ENCODE measurements at regions of chr11 and their contacts with region 1.

Region 1: DNA sequence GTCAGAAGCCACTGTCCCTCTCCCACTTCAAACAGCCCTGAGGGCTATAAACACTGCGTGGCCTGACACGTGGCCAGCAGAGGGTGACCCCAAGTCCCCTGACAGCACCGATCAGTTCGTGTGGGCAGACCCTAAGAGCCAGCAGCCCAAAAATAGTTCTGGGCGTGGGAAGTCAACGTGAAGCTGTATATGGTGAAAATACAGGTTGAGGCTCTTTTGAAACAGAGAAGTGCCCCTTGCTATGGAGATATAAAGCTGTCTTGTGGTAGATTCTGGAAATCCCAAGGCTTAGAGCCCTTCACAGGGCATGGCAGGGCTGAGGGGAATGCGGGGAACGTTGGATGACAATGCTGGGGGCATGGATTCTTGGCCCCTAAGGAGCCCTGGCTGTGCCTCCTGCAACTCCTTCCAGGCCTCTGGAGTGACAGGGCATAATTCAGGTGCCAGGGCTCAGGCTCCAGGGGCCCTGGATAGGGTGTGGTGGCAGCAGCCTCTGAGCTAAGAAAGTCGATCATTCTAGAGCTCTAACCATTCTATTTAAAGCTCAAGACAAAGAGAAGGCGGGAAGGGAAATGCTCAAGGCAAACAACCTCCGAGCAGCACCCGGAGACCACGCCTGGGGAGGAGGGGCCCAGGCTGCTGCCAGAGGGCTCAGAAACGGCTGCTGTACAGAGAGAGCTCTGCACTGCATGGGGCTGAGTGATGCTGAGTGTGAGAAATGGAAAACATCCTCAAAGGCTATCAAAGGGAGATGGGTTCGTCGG is 60.4 kb upstream of the CD5 start:
- DNase-seq: peak; percentile 72 to 95 (median 90)
- ATAC-seq: peak; percentile 96
- H3K4me3 ChIP-seq: peak overlapping the region; percentile 27
- H3K4me3 Mint-ChIP-seq: peak overlapping the region; percentile 83
- H3K27ac ChIP-seq: peak overlapping the region; percentile 90 to 93
- H3K27ac Mint-ChIP-seq: peak overlapping the region; percentile 98
- H3K4me1 ChIP-seq: peaks cover 56% of the 10 kb centered on the region
- H3K4me1 Mint-ChIP-seq: peaks cover 62% of the 10 kb centered on the region
- H3K27me3 ChIP-seq: no peaks in the 10 kb centered on the region
- H3K27me3 Mint-ChIP-seq: no peaks in the 10 kb centered on the region
- CTCF ChIP-seq: no peak

Region 2: GRCh38 chr11:60485986-60486385 is 556.0 kb before region 1 on chr11:
- CTCF ChIA-PET with region 1: no interaction called
- POLR2A ChIA-PET with region 1: no interaction called
- intact Hi-C with region 1: no loop called
- DNase-seq: peak in 3 of 14 experiments; percentile 36 to 50 (median 38)
- ATAC-seq: peak; percentile 34
- H3K4me3 ChIP-seq: no peak overlapping the region
- H3K4me3 Mint-ChIP-seq: no peak overlapping the region
- H3K27ac ChIP-seq: no peak overlapping the region
- H3K27ac Mint-ChIP-seq: no peak overlapping the region
- H3K4me1 ChIP-seq: no peaks in the 10 kb centered on the region
- H3K4me1 Mint-ChIP-seq: peaks cover 4% of the 10 kb centered on the region
- H3K27me3 ChIP-seq: no peaks in the 10 kb centered on the region
- H3K27me3 Mint-ChIP-seq: no peaks in the 10 kb centered on the region
- CTCF ChIP-seq: no peak

Region 3: GRCh38 chr11:60544076-60544475 is 497.9 kb before region 1 on chr11:
- CTCF ChIA-PET with region 1: no interaction called
- POLR2A ChIA-PET with region 1: no interaction called
- intact Hi-C with region 1: no loop called
- DNase-seq: no peak
- ATAC-seq: no peak
- H3K4me3 ChIP-seq: no peak overlapping the region
- H3K4me3 Mint-ChIP-seq: no peak overlapping the region
- H3K27ac ChIP-seq: no peak overlapping the region
- H3K27ac Mint-ChIP-seq: no peak overlapping the region
- H3K4me1 ChIP-seq: no peaks in the 10 kb centered on the region
- H3K4me1 Mint-ChIP-seq: no peaks in the 10 kb centered on the region
- H3K27me3 ChIP-seq: no peaks in the 10 kb centered on the region
- H3K27me3 Mint-ChIP-seq: peaks cover 26% of the 10 kb centered on the region
- CTCF ChIP-seq: no peak

Region 4: DNA sequence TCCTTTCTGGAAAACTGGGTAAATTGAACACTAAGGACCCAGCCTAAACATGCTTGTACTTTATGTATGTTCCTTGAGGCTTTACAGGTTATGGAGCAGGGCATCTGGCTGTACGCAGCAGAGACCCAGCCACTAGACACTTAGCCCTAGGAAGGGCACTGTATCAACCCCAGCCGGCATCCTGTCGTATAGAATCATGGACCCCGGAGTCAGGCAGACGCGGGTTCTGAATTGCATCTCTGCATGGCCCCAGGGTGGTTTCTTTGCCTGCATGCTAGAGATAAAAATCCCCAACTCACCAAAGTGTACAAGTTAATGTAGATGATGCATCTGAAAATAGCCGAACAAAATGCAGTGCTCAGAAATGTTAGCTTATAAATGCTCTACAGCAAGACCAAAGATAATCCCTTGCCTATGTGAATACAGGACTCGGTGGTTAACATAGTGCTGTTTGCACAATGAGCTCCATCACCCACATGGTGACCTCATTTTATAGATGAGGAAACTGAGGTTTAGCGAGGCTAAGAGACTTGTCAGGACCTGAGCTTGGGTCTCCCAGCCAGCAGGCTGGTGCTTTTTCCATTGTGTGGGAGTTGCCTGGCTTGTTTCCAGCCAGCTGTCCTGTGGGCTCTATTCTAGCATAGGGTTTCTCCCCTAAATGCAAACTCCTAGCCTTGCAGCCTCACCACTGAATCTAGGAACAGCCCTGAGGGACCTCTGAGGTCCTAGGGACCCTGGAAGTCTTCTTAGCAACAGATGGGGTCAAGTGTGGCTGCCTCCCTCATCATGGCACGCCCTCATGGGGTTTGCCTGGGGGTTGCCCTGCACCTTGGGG is 63.2 kb before region 1 on chr11:
- CTCF ChIA-PET with region 1: interaction called, 3 read pairs
- POLR2A ChIA-PET with region 1: interaction called, 89 read pairs
- intact Hi-C with region 1: no loop called
- DNase-seq: peak in 5 of 14 experiments; percentile 37 to 76 (median 71)
- ATAC-seq: peak; percentile 15
- H3K4me3 ChIP-seq: peak overlapping the region; percentile 27
- H3K4me3 Mint-ChIP-seq: peak overlapping the region; percentile 91
- H3K27ac ChIP-seq: peak overlapping the region; percentile 75 to 95
- H3K27ac Mint-ChIP-seq: peak overlapping the region; percentile 94
- H3K4me1 ChIP-seq: peaks cover 87% of the 10 kb centered on the region
- H3K4me1 Mint-ChIP-seq: peaks cover 87% of the 10 kb centered on the region
- H3K27me3 ChIP-seq: no peaks in the 10 kb centered on the region
- H3K27me3 Mint-ChIP-seq: no peaks in the 10 kb centered on the region
- CTCF ChIP-seq: no peak

Region 5: GRCh38 chr11:61004180-61004611 is 37.7 kb before region 1 on chr11:
- CTCF ChIA-PET with region 1: interaction called, 3 read pairs
- POLR2A ChIA-PET with region 1: interaction called, 29 read pairs
- intact Hi-C with region 1: no loop called
- DNase-seq: peak in 11 of 14 experiments; percentile 40 to 73 (median 55)
- ATAC-seq: peak; percentile 59
- H3K4me3 ChIP-seq: peak overlapping the region; percentile 30
- H3K4me3 Mint-ChIP-seq: peak overlapping the region; percentile 86
- H3K27ac ChIP-seq: peak overlapping the region; percentile 63 to 71
- H3K27ac Mint-ChIP-seq: peak overlapping the region; percentile 95
- H3K4me1 ChIP-seq: peaks cover 89% of the 10 kb centered on the region
- H3K4me1 Mint-ChIP-seq: peaks cover 92% of the 10 kb centered on the region
- H3K27me3 ChIP-seq: no peaks in the 10 kb centered on the region
- H3K27me3 Mint-ChIP-seq: no peaks in the 10 kb centered on the region
- CTCF ChIP-seq: no peak

Region 6: DNA sequence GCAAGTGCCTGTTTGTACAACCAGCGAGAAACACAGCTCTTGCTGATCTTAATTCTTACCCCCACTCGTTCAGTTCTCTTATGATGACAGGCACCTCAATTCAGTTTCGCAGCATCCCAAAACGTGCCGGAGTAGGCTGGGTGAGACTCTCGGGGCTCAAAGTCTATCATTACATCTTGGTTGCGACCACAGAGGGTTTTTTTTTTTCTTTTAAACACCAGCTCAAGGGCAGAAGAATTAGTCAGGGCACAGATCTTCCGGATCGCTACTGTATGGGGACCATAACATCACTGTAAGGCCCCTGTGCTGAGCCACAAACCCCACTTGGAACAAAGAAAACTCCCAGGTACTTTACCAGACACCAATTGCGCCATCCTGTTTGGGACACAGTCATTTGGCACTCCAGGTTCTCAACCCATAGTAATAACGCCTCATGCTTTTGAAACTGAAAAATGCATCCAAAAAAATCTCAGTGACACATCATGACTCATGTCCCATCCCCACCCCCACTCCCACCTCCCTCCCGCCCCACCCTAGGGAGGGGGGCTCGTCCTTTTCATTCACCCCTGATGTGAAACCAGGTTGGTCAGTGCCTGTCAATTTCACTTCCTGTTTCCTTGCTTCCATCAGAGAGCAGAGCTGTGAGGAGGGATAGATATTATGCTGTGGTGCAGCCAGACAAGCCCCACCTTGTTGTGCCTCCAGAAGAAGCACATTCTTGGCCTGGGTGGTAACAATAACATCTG is 19.3 kb after region 1 on chr11:
- CTCF ChIA-PET with region 1: interaction called, 7 read pairs
- POLR2A ChIA-PET with region 1: interaction called, 91 read pairs
- intact Hi-C with region 1: loop called (anchors 2 kb)
- DNase-seq: peak; percentile 43 to 92 (median 72)
- ATAC-seq: peak; percentile 78
- H3K4me3 ChIP-seq: peak overlapping the region; percentile 36
- H3K4me3 Mint-ChIP-seq: peak overlapping the region; percentile 82
- H3K27ac ChIP-seq: peak overlapping the region; percentile 74 to 85
- H3K27ac Mint-ChIP-seq: peak overlapping the region; percentile 92
- H3K4me1 ChIP-seq: peaks cover 82% of the 10 kb centered on the region
- H3K4me1 Mint-ChIP-seq: peaks cover 76% of the 10 kb centered on the region
- H3K27me3 ChIP-seq: no peaks in the 10 kb centered on the region
- H3K27me3 Mint-ChIP-seq: no peaks in the 10 kb centered on the region
- CTCF ChIP-seq: no peak

Region 7: DNA sequence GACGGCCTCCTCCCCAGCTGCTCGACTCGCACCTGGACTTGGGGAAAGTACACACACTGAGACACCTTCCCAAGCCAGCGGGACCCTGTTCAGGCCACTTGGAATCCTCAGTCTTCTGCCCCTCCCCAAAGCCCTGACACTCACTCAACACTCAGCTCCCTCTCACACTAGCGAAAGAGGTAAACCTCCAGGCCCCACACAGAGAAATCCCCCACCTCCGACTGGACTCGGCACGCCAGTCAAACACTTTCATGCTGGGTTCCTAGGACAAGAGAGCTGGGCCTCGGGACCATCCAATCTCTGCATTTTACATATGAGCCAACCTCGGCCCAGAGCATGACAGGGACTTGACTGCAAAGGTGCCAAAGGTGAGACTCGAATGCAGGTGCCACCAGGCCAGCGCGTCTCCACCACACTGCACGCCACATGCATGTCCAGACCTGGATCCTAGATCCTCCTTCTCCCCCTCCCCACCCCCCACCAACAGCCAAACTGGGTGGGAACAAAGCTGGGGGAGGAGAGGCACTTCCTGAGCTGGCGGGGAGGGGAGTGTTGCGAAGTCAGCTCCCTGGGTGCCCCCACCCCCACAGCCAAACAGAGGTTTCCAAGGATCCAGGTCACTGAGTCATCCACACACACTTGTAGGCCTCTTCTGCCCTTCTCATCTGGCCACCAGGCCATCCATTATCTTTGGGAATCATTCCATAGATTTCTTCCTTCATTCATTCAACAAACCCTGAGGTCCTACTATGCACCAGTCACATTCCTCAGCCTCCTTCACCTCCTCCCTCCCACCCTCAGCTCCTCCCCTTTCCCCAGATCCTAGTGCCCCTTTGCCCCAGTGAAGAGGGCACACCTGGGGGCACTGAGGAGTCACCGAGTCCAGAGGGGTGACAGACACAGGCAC is 49.7 kb after region 1 on chr11:
- CTCF ChIA-PET with region 1: no interaction called
- POLR2A ChIA-PET with region 1: interaction called, 16 read pairs
- intact Hi-C with region 1: no loop called
- DNase-seq: peak in 6 of 14 experiments; percentile 43 to 74 (median 58)
- ATAC-seq: peak; percentile 52
- H3K4me3 ChIP-seq: peak overlapping the region; percentile 28
- H3K4me3 Mint-ChIP-seq: peak overlapping the region; percentile 81
- H3K27ac ChIP-seq: peak overlapping the region; percentile 59 to 82
- H3K27ac Mint-ChIP-seq: peak overlapping the region; percentile 93
- H3K4me1 ChIP-seq: peaks cover 50% of the 10 kb centered on the region
- H3K4me1 Mint-ChIP-seq: peaks cover 66% of the 10 kb centered on the region
- H3K27me3 ChIP-seq: no peaks in the 10 kb centered on the region
- H3K27me3 Mint-ChIP-seq: no peaks in the 10 kb centered on the region
- CTCF ChIP-seq: no peak

Region 8: GRCh38 chr11:61129639-61130523 is 87.9 kb after region 1 on chr11:
- CTCF ChIA-PET with region 1: interaction called, 9 read pairs
- POLR2A ChIA-PET with region 1: interaction called, 18 read pairs
- intact Hi-C with region 1: no loop called
- DNase-seq: peak; percentile 86 to 94 (median 88)
- ATAC-seq: peak; percentile 84
- H3K4me3 ChIP-seq: no peak overlapping the region
- H3K4me3 Mint-ChIP-seq: peak overlapping the region; percentile 52
- H3K27ac ChIP-seq: peak overlapping the region; percentile 29 to 50
- H3K27ac Mint-ChIP-seq: peak overlapping the region; percentile 50
- H3K4me1 ChIP-seq: peaks cover 25% of the 10 kb centered on the region
- H3K4me1 Mint-ChIP-seq: peaks cover 39% of the 10 kb centered on the region
- H3K27me3 ChIP-seq: no peaks in the 10 kb centered on the region
- H3K27me3 Mint-ChIP-seq: no peaks in the 10 kb centered on the region
- CTCF ChIP-seq: peak; percentile 99